Mammary epithelial cell (primary cell): ENCODE measurements at regions of chr11 and their contacts with region 1.

Region 1: DNA sequence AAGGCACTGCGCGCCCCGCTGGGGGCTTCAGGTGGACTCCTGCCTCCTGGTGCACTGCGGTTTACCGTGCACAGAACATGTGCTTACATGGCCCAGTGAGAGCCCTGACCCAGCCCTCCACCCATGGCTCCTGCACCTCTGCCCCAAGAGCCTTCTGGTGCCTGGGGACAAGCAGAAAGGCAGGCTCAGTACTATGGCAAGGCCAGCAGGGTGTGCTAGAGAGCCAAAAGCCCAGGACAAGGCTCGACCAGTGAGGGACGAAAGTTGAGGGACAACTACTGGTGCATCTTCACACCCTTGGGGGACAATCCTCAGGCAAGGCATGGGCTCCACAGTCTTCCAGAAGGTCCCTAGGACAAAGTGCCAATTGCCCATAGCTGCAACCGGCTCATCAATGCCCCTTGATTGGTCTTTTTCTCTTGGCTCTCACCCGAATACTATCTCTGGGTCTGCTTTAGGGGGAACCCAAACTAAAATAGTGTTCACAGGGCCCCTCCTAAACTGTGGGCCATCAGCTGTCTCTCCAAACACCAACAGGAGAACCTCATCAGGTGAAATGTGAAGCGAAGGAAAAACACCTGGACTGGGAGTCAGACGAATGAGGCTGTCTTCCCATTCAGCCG is 13.5 kb downstream of the PGA5 start:
- DNase-seq: peak; percentile 39
- H3K4me3 ChIP-seq: no peak overlapping the region
- H3K27ac ChIP-seq: no peak overlapping the region
- H3K4me1 ChIP-seq: no peaks in the 10 kb centered on the region
- H3K27me3 ChIP-seq: no peaks in the 10 kb centered on the region
- CTCF ChIP-seq: peak; percentile 97

Region 2: GRCh38 chr11:61297746-61298145 is 43.2 kb after region 1 on chr11:
- CTCF ChIA-PET with region 1: no interaction called
- dilution Hi-C with region 1: no loop called
- in situ Hi-C with region 1: no loop called
- intact Hi-C with region 1: loop called (anchors 1 kb)
- DNase-seq: peak; percentile 97
- H3K4me3 ChIP-seq: no peak overlapping the region
- H3K27ac ChIP-seq: peak overlapping the region; percentile 48
- H3K4me1 ChIP-seq: peaks cover 60% of the 10 kb centered on the region
- H3K27me3 ChIP-seq: peaks cover 2% of the 10 kb centered on the region
- CTCF ChIP-seq: no peak

Region 3: GRCh38 chr11:61325649-61326414 is 71.3 kb after region 1 on chr11:
- CTCF ChIA-PET with region 1: no interaction called
- dilution Hi-C with region 1: no loop called
- in situ Hi-C with region 1: no loop called
- intact Hi-C with region 1: loop called (anchors 1 kb)
- DNase-seq: peak; percentile 76
- H3K4me3 ChIP-seq: no peak overlapping the region
- H3K27ac ChIP-seq: peak overlapping the region; percentile 15
- H3K4me1 ChIP-seq: peaks cover 19% of the 10 kb centered on the region
- H3K27me3 ChIP-seq: no peaks in the 10 kb centered on the region
- CTCF ChIP-seq: no peak

Region 4: DNA sequence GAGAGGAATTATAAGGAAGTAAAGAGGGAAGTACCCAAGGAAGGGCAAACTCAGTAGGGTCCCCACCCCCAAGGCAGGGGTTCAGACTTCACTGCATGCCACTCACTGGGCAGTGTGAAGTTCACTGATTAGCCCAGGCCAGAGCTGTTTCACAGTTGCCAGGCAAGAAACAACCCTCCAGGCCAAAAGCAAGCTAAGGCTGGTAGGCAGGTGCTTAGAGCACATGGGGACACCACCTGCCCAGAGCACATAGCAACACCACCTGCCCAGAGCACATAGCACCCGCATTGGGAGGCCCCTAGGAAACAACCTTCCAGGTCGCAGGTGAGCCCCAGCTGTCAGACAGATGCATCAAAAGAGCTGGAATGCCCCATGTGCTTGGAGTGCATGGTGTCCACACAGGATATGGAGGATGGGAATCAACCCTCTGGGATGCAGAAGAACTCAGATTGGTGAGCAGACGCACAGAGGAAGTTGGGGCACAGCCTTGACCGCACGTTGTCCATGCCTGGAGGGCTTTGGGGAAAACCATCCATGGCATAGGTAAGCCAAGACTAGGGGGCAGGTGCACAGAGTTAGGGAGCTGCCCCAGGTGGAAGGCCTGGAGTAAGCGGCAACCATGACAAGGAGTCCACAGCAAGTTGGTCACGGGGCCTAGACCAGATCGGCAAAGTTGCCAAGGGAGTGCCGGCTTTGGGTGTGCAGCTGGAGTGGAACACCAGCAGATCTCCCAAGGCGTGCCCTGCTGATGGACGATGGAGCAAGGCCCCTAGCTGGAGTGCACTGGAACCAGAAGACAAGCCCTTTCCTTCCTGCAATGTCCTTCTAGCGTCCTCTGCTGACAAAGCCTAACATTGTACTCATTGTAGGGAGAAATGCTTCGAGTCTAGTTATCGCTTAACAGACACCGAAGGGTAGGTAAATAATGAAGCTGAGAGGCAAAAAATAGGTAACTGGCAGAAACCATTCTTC is 130.0 kb after region 1 on chr11:
- CTCF ChIA-PET with region 1: no interaction called
- dilution Hi-C with region 1: no loop called
- in situ Hi-C with region 1: loop called (anchors 10 to 25 kb)
- intact Hi-C with region 1: loop called (anchors 1 kb)
- DNase-seq: no peak
- H3K4me3 ChIP-seq: no peak overlapping the region
- H3K27ac ChIP-seq: no peak overlapping the region
- H3K4me1 ChIP-seq: peaks cover 9% of the 10 kb centered on the region
- H3K27me3 ChIP-seq: no peaks in the 10 kb centered on the region
- CTCF ChIP-seq: peak; percentile 51 to 60

Region 5: DNA sequence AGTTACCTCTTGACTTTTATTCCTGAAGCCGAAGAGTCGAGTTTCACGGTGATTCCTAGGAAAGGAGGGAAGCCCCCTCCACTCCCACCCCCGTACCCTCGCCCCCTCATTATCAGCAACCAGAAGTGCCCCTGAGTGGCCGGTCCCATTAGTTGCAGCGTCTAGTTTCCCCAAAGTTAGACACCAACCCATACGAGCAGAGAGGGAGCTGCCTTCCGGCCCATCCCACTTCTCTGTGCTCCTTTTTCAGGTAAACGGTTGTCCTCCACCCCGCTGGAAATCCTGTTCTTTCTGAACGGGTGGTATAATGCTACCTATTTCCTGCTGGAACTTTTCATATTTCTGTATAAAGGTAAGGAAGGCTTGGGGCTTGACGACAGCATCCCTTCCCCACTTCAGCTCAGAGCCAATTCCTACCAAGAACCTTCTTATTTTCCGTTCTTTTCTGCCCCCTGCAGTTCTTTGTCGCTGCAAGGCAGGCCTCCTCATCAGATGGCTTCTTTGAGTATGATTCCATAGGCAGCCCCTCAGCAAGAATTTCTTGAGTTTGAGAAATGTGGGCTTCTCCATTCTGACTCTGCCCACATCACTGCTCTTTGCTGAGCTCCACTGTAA is 138.6 kb after region 1 on chr11:
- CTCF ChIA-PET with region 1: no interaction called
- dilution Hi-C with region 1: no loop called
- in situ Hi-C with region 1: loop called (anchors 10 to 25 kb)
- intact Hi-C with region 1: no loop called
- DNase-seq: no peak
- H3K4me3 ChIP-seq: peak overlapping the region; percentile 77 to 81 (median 80)
- H3K27ac ChIP-seq: peak overlapping the region; percentile 25
- H3K4me1 ChIP-seq: peaks cover 14% of the 10 kb centered on the region
- H3K27me3 ChIP-seq: no peaks in the 10 kb centered on the region
- CTCF ChIP-seq: peak; percentile 8 to 38

Region 6: GRCh38 chr11:61446211-61446651 is 191.7 kb after region 1 on chr11:
- CTCF ChIA-PET with region 1: no interaction called
- dilution Hi-C with region 1: no loop called
- in situ Hi-C with region 1: no loop called
- intact Hi-C with region 1: no loop called
- DNase-seq: peak; percentile 89
- H3K4me3 ChIP-seq: no peak overlapping the region
- H3K27ac ChIP-seq: no peak overlapping the region
- H3K4me1 ChIP-seq: peaks cover 3% of the 10 kb centered on the region
- H3K27me3 ChIP-seq: no peaks in the 10 kb centered on the region
- CTCF ChIP-seq: peak; percentile 95 to 96